ENCODE measurements at regions of chr12 and their contacts with region 1.

Region 1: GRCh38 chr12:47397664-47398281 is 308.1 kb downstream of the RPAP3 start:
- DNase-seq: peak; percentile 30
- H3K4me3 Mint-ChIP-seq: no peak overlapping the region
- H3K27ac Mint-ChIP-seq: peak overlapping the region; percentile 60
- H3K4me1 Mint-ChIP-seq: peaks cover 8% of the 10 kb centered on the region
- H3K27me3 Mint-ChIP-seq: no peaks in the 10 kb centered on the region
- CTCF ChIP-seq: no peak

Region 2: GRCh38 chr12:46627686-46628085 is 770.1 kb before region 1 on chr12:
- CTCF ChIA-PET with region 1: no interaction called
- intact Hi-C with region 1: no loop called
- DNase-seq: no peak
- H3K4me3 Mint-ChIP-seq: no peak overlapping the region
- H3K27ac Mint-ChIP-seq: peak overlapping the region; percentile 43
- H3K4me1 Mint-ChIP-seq: peaks cover 31% of the 10 kb centered on the region
- H3K27me3 Mint-ChIP-seq: no peaks in the 10 kb centered on the region
- CTCF ChIP-seq: no peak

Region 3: GRCh38 chr12:46752396-46752795 is 645.4 kb before region 1 on chr12:
- CTCF ChIA-PET with region 1: no interaction called
- intact Hi-C with region 1: no loop called
- DNase-seq: no peak
- H3K4me3 Mint-ChIP-seq: no peak overlapping the region
- H3K27ac Mint-ChIP-seq: no peak overlapping the region
- H3K4me1 Mint-ChIP-seq: peaks cover 9% of the 10 kb centered on the region
- H3K27me3 Mint-ChIP-seq: no peaks in the 10 kb centered on the region
- CTCF ChIP-seq: no peak

Region 4: GRCh38 chr12:47190271-47190750 is 207.5 kb before region 1 on chr12:
- CTCF ChIA-PET with region 1: no interaction called
- intact Hi-C with region 1: loop called (anchors 10 kb)
- DNase-seq: peak; percentile 42
- H3K4me3 Mint-ChIP-seq: peak overlapping the region; percentile 4
- H3K27ac Mint-ChIP-seq: peak overlapping the region; percentile 99
- H3K4me1 Mint-ChIP-seq: peaks cover 79% of the 10 kb centered on the region
- H3K27me3 Mint-ChIP-seq: no peaks in the 10 kb centered on the region
- CTCF ChIP-seq: no peak

Region 5: GRCh38 chr12:47408171-47408871 is 10.5 kb after region 1 on chr12:
- CTCF ChIA-PET with region 1: interaction called, 10 read pairs
- intact Hi-C with region 1: no loop called
- DNase-seq: peak; percentile 44
- H3K4me3 Mint-ChIP-seq: no peak overlapping the region
- H3K27ac Mint-ChIP-seq: no peak overlapping the region
- H3K4me1 Mint-ChIP-seq: no peaks in the 10 kb centered on the region
- H3K27me3 Mint-ChIP-seq: no peaks in the 10 kb centered on the region
- CTCF ChIP-seq: no peak

Measured in Calu3 (cell line).